MCF 10A (cell line): ENCODE measurements at regions of chr20 and their contacts with region 1.

Region 1: DNA sequence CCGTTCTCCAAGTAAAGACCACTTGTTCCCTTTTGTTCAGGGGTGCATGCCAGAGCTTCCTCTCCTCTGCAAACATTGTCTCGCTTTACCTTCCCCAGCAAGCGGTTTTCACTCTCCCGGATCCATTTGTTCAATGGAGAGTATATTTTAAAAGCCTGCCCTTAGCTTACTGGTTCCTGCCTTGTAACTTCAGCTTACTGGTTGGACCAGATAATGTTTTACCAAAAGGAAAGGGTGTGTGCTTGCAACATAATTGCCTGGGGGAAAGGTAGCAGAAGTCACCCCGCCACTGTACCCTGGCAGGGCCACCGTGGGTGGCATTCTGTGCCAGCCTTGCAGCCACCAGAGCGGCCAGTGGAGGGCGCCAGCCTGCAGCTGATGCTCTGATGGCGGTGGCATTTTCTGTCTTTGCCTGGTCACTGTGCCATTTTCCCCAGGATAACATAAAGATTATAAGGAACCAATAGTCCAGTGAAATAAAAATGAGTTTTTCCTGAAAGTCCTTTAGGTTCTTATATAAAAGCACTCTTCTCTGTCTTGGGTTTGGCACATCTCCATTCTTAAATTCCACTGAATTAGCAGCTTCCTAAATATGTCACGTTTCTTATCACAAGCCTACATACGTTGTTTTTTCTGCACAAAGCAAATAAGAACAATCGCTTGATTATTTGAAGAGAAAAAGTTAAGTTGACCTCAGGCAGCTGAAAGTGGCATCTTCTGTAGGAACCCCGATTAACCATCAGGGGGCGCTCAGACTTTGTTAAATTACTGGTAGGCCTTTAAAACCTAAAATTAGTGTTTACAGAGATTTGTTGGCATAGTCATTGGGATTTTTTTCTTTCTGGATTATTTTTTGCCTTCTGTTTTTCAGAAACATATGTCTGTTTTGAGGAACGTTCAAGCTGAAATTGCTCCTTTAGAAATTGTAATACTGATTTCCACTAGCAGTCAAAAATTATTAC is 67.4 kb upstream of the XRN2 start:
- DNase-seq: peak; percentile 72
- H3K4me3 Mint-ChIP-seq: no peak overlapping the region
- H3K27ac Mint-ChIP-seq: no peak overlapping the region
- H3K4me1 Mint-ChIP-seq: peaks cover 5% of the 10 kb centered on the region
- H3K27me3 Mint-ChIP-seq: no peaks in the 10 kb centered on the region
- CTCF ChIP-seq: peak; percentile 75

Region 2: DNA sequence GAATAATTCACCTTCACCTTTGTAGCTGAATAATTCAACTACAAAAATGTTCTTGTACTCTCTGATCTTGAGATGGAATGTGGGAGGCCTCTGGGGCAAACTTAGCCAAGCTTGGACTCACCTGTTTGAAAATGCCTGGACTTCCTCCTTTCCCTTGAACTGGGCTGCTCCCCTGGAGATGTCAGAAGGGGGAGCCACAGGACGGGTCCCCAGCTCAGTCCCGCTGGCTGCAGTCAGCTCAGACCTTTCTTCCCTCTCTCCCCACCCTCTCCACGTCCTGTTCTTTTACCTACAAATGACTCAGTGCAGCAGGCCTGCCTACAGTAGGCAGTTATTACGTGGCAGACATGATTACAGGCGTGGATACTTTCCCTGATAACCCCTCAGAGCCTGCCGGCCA is 391.8 kb before region 1 on chr20:
- CTCF ChIA-PET with region 1: interaction called, 82 read pairs
- POLR2A ChIA-PET with region 1: no interaction called
- intact Hi-C with region 1: no loop called
- DNase-seq: peak; percentile 23
- H3K4me3 Mint-ChIP-seq: no peak overlapping the region
- H3K27ac Mint-ChIP-seq: no peak overlapping the region
- H3K4me1 Mint-ChIP-seq: no peaks in the 10 kb centered on the region
- H3K27me3 Mint-ChIP-seq: no peaks in the 10 kb centered on the region
- CTCF ChIP-seq: no peak

Region 3: DNA sequence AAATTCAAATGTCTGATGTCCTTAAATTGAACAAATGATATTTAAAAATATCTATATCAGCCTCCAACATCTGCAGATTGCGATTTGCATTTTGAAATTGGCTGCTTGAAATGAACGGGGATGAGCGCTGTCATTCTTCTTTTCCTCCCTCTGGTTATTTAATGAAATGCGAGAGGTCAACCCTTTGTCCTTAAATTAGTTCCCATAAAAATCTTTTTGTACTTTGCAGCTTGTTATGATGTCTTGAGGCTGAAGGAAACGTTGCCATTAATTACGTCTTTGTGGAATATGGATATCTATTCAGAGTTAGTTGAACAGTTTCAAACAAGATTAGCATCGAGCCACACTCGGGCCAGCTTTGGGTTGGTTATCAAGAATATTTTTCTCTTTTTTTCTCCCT is 269.6 kb before region 1 on chr20:
- CTCF ChIA-PET with region 1: no interaction called
- POLR2A ChIA-PET with region 1: no interaction called
- intact Hi-C with region 1: no loop called
- DNase-seq: no peak
- H3K4me3 Mint-ChIP-seq: no peak overlapping the region
- H3K27ac Mint-ChIP-seq: no peak overlapping the region
- H3K4me1 Mint-ChIP-seq: no peaks in the 10 kb centered on the region
- H3K27me3 Mint-ChIP-seq: peaks cover 66% of the 10 kb centered on the region
- CTCF ChIP-seq: no peak

Region 4: DNA sequence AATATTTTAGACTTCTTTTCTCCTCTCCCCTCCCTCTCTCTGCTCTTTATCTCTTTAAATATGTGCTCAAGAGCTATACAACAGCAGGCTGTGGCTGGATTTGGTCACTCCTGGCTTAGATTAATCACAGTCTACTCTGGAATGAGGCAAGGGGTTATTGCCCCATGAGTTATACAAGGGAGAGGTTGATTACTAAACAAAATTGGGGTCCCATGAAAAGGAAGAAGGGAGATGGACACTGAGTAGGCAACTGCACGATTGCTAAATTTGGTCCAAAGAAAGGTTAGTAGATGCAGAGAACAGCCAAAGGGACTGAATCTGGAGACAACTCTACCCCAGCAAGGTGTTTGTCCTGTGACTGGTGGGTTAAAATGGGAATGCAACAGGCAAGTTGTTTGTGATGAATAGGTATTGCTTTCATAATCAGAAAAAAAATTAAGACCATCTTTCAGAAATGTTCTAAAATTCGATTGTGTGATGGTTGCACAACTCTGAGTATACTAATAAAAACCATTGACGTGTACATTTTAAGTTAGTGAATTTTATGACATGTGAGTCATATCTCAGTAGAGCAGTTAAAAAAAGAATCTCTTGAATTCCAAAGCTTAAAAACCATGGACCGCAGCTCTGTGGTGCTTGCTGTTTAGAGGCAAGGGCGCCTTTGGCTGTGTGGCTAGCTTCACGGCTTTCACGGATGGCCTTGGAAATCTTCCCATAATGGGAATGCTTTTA is 52.8 kb before region 1 on chr20:
- CTCF ChIA-PET with region 1: interaction called, 22 read pairs
- POLR2A ChIA-PET with region 1: interaction called, 4 read pairs
- intact Hi-C with region 1: no loop called
- DNase-seq: peak; percentile 82
- H3K4me3 Mint-ChIP-seq: peak overlapping the region; percentile 21
- H3K27ac Mint-ChIP-seq: peak overlapping the region; percentile 61
- H3K4me1 Mint-ChIP-seq: peaks cover 40% of the 10 kb centered on the region
- H3K27me3 Mint-ChIP-seq: no peaks in the 10 kb centered on the region
- CTCF ChIP-seq: no peak

Region 5: GRCh38 chr20:21303061-21303871 is 67.5 kb after region 1 on chr20 and contains the start of gene XRN2:
- CTCF ChIA-PET with region 1: interaction called, 33 read pairs
- POLR2A ChIA-PET with region 1: interaction called, 8 read pairs
- intact Hi-C with region 1: no loop called
- DNase-seq: peak; percentile 95
- H3K4me3 Mint-ChIP-seq: peak within 1 kb of the TSS; percentile 87
- H3K27ac Mint-ChIP-seq: peak within 1 kb of the TSS; percentile 99
- H3K4me1 Mint-ChIP-seq: peaks cover 18% of the 10 kb centered on the region
- H3K27me3 Mint-ChIP-seq: no peaks in the 10 kb centered on the region
- CTCF ChIP-seq: no peak
- total RNA-seq, gene XRN2: 60.8 and 67.8 TPM in 2 replicates

Region 6: DNA sequence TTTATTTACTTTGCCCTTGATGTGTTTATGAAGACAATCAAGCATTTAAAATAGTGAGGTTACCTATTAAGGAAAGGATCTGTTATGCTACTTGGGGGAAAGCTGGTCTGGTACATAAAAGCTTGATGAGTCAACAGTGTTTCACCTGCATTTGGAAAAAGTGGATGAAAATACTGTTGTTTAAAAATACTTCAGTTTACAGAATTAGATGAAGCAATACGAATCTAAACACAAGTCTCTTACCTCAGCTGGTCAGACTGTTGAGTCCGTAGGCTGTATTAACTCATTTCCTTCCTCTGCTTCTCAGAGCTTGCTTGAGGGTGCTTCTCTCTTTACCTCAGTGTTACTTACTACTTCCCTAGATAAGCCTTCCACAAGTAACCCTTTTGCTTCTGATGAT is 125.5 kb after region 1 on chr20:
- CTCF ChIA-PET with region 1: interaction called, 9 read pairs
- POLR2A ChIA-PET with region 1: no interaction called
- intact Hi-C with region 1: loop called (anchors 5 kb)
- DNase-seq: peak; percentile 52
- H3K4me3 Mint-ChIP-seq: no peak overlapping the region
- H3K27ac Mint-ChIP-seq: peak overlapping the region; percentile 16
- H3K4me1 Mint-ChIP-seq: peaks cover 29% of the 10 kb centered on the region
- H3K27me3 Mint-ChIP-seq: no peaks in the 10 kb centered on the region
- CTCF ChIP-seq: no peak

Region 7: GRCh38 chr20:21496452-21496851 is 260.7 kb after region 1 on chr20:
- CTCF ChIA-PET with region 1: interaction called, 329 read pairs
- POLR2A ChIA-PET with region 1: interaction called, 4 read pairs
- intact Hi-C with region 1: no loop called
- DNase-seq: peak; percentile 34
- H3K4me3 Mint-ChIP-seq: no peak overlapping the region
- H3K27ac Mint-ChIP-seq: peak overlapping the region; percentile 91
- H3K4me1 Mint-ChIP-seq: peaks cover 6% of the 10 kb centered on the region
- H3K27me3 Mint-ChIP-seq: peaks cover 13% of the 10 kb centered on the region
- CTCF ChIP-seq: no peak

Region 8: DNA sequence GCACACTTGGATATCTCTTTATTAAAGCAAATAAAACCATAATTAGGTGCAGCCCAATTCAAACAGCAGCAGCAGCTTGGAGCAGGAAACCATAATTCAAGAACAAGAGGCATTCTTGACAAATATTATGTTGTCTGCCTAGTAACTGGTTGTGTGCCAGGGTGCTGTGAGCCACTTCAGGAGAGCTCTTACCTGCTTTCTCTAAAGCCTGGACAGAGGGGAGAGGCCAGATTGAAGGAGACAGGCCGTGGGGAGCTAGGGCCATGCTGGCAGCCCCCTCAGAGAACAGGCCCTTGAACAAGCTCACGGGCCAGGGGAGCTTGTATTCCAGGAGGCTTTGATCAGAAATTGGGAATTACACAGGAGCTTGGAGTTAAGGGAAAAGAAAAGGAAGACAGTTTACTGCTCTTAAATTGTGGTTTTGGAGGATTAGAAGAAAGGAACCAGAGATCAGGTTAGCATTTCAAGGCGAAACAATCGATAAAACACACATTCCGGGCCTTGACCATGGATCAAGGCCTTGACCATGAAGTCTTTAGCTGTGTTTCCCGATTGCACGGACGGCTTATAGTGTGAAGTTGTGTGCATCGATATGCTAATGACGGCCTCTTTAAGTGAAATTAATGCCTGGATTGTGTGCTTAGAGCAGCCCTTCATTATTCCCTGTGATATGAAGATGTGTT is 347.9 kb after region 1 on chr20:
- CTCF ChIA-PET with region 1: interaction called, 16 read pairs
- POLR2A ChIA-PET with region 1: no interaction called
- intact Hi-C with region 1: no loop called
- DNase-seq: no peak
- H3K4me3 Mint-ChIP-seq: no peak overlapping the region
- H3K27ac Mint-ChIP-seq: no peak overlapping the region
- H3K4me1 Mint-ChIP-seq: no peaks in the 10 kb centered on the region
- H3K27me3 Mint-ChIP-seq: peaks cover 40% of the 10 kb centered on the region
- CTCF ChIP-seq: no peak

Region 9: GRCh38 chr20:21860871-21861270 is 625.1 kb after region 1 on chr20:
- CTCF ChIA-PET with region 1: no interaction called
- POLR2A ChIA-PET with region 1: no interaction called
- intact Hi-C with region 1: no loop called
- DNase-seq: no peak
- H3K4me3 Mint-ChIP-seq: no peak overlapping the region
- H3K27ac Mint-ChIP-seq: no peak overlapping the region
- H3K4me1 Mint-ChIP-seq: no peaks in the 10 kb centered on the region
- H3K27me3 Mint-ChIP-seq: no peaks in the 10 kb centered on the region
- CTCF ChIP-seq: no peak